ENCODE measurements at regions of chr2 and their contacts with region 1.

Region 1: DNA sequence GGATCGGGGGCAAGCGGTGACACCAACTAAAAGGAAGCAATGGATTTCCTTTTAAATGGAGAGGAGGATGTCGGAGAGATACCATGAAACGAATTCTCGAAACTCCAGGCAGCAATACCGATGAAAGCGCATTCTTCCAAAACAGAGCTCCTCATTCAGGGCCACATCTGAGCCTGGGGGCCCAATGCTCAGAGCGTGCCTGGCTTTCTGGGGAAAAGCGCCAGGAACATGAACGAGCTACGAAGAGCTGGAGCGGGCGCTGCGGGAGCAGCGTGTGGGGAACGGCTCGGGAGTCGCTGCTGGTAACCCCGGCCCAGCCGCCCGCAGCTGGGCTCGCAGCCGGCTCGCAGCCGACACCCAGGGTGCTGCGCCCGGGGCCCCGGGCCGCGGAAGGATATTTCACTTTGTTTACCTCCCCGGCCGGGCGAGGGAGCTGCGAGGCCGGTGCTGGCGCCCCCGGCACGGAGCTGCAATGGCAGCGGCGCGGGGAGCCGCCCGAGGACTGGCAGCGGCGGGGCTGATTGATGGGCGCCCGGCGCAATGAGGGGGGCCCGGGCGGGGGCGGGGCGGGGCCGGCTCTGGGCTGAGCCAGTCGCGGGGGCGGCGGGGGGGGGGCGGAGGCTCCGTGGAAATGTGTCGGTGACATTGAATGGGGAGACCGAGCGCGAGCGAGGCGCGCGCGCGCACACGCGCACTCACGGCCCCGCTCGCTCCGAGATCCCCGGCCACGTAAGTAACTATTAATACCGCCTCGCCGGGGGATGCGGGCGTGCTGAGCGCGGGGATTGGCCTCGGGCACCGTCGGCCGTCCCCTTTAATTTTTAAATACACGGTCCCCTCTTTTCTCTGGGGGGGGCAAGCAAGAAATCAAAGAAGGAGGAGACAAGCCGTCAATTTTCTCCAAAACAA is at the start of gene TRIB2:
- DNase-seq: peak; percentile 93
- ATAC-seq: peak; percentile 86
- total RNA-seq, gene TRIB2: 33.4 TPM

Region 2: DNA sequence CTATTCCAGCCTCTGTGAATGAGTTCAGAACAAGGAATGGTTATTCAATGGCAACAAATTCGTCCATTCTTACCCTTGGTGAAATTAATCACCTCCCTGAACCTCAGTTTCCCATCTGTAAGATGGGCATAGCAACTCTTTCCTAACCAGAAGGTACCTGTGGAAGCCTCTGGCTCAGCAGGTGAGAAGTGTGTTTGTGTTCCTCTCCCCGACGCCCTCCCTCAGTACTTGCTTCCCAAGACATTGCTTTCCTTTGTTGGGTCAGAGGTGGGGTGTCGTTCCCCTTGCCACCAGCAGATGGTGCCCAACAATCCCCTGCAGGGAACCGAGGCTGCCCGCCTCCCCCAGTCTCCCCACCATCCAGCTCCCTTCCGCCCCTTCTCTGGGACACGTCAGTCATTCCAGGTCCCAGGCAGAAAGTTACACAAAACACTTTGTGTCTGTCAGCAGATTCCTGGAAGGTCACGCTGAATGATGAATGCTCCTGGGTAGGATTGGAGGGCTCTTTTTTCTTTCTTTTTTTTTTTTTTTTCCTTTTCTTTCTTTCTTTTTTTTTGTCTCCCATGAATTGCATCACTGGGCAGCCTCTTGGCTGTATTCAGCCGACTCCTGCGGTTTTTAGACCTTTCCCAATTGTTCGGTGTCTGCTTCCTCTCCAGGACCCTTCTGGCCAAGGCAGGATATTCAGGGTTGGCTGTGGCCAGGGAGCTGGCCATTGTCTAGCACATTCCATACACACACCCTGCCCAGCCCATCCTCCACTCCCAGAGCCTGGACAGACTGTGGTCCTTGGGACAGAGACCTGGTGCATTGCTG is 852.8 kb before region 1 on chr2:
- intact Hi-C with region 1: loop called (anchors 1 kb)
- DNase-seq: peak; percentile 91
- ATAC-seq: peak; percentile 95

Region 3: GRCh38 chr2:12176623-12177454 is 539.7 kb before region 1 on chr2:
- intact Hi-C with region 1: loop called (anchors 5 kb)
- DNase-seq: no peak
- ATAC-seq: peak; percentile 73

Region 4: GRCh38 chr2:12486205-12487118 is 230.1 kb before region 1 on chr2:
- intact Hi-C with region 1: loop called (anchors 5 kb)
- DNase-seq: no peak
- ATAC-seq: peak; percentile 54

Region 5: GRCh38 chr2:12636837-12637581 is 79.5 kb before region 1 on chr2:
- intact Hi-C with region 1: no loop called
- DNase-seq: no peak
- ATAC-seq: peak; percentile 48

Region 6: DNA sequence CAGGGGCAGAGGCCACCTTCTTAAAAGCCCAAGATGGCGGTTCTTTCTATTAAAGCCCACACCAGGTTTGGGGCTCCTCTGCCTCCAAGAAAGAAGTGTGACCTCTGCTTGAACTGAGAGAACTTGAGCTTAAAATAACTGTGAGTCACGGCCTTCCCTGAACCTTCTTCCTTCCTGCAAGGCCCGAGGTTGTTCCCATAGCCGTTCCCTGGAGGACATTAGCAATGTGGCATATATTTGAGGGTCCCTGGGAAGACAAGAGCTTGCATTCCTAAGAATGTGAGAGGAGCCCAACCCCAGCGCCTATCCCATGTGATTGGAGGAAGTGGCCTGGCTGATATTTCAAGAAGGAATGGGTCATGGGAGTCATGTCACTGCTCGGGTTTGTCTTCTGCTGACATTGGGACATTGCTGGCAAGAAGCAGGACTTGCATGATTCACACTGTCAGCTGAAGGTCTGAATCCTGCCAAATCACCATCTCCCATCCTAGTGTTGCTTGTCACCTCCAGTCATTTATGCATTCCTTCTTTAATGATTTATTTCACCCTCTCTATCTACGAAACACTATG is 168.3 kb after region 1 on chr2:
- intact Hi-C with region 1: loop called (anchors 2 kb)
- DNase-seq: peak; percentile 69
- ATAC-seq: peak; percentile 82